H1 (cell line): ENCODE measurements at regions of chr15 and their contacts with region 1.

Region 1: DNA sequence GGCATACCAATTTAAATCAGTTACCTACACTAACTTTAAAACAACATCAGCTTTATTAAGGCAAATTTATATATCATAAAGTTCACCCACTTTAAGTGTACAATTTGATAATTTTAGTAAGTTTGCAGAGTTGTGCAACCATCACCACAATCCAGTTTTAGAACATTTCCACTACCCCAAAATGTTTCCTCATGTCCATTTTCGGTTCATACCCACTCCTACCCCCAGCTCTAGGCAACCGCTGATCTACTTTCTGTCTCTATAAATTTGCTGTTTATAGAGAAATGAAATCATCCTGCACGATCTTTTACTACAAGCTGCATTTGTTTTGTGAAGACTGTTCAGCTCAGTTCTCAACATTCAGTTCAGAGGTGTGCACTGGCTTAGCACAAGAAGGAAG is 31.5 kb upstream of the FAM81A start:
- DNase-seq: no peak
- H3K4me3 ChIP-seq: no peak overlapping the region
- H3K27ac ChIP-seq: no peak overlapping the region
- H3K4me1 ChIP-seq: peaks cover 3 to 12% (median 6%) of the 10 kb centered on the region in 4 experiments; a peak in 4 of 7 replicates
- H3K27me3 ChIP-seq: peaks cover 0 to 2% (median 0%) of the 10 kb centered on the region in 4 experiments; a peak in 3 of 7 replicates
- CTCF ChIP-seq: no peak
- EP300 ChIP-seq: no peak
- POLR2A ChIP-seq: no peak
- RAD21 ChIP-seq: no peak

Region 2: GRCh38 chr15:59420986-59421618 is 14.7 kb after region 1 on chr15:
- CTCF ChIA-PET with region 1: interaction called, 14 read pairs
- POLR2A ChIA-PET with region 1: interaction called, 3 read pairs
- DNase-seq: peak; percentile 50 to 64
- H3K4me3 ChIP-seq: no peak overlapping the region
- H3K27ac ChIP-seq: no peak overlapping the region
- H3K4me1 ChIP-seq: peaks cover 0 to 7% (median 2%) of the 10 kb centered on the region in 4 experiments; a peak in 2 of 7 replicates
- H3K27me3 ChIP-seq: no peaks in the 10 kb centered on the region; a peak in 1 of 7 replicates
- CTCF ChIP-seq: peak in 1 of 3 experiments; percentile 77; a peak in 2 of 4 replicates
- EP300 ChIP-seq: no peak
- POLR2A ChIP-seq: no peak
- RAD21 ChIP-seq: peak; percentile 41 to 45